ENCODE measurements at regions of chr1 and their contacts with region 1.

Region 1: GRCh38 chr1:185720633-185721272 is 13.4 kb upstream of the HMCN1 start:
- DNase-seq: peak; percentile 36
- H3K4me3 ChIP-seq: no peak overlapping the region
- CTCF ChIP-seq: peak; percentile 32

Region 2: DNA sequence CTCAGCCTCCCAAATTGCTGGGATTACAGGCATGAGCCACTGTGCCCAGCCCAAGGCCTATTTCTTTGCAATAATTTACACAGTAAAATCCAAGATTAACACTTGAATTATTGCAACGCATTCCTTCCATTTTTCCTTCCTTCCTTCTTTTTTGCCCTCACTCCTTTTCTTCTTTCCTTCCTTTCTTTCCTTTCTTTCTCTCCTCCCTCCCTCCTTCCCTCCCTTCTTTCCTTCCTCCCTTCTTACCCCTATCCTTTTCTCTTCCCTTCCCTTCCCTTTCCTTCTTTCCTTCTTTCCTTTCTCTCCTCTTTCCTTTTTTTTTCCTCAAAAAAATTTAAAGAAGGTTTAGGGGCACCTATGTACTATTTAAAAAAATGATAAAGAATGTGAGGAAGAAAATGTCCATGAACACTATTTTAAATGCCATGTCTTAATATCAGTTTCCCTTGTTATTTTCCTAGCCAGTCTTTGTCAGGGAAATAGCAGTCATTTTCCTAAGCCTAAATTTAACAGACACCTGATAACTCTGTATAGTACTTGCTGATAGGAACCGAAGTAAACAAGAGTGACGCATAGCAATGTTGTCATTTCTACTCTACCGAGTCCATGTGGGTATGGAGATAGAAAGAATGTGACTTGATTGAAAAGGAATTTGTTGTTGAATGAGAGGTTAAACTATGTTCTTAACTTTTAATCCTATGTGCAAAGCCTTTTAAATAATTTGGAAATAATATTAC is 66.4 kb before region 1 on chr1:
- CTCF ChIA-PET with region 1: no interaction called
- POLR2A ChIA-PET with region 1: no interaction called
- DNase-seq: no peak
- H3K4me3 ChIP-seq: no peak overlapping the region
- CTCF ChIP-seq: no peak

Region 3: DNA sequence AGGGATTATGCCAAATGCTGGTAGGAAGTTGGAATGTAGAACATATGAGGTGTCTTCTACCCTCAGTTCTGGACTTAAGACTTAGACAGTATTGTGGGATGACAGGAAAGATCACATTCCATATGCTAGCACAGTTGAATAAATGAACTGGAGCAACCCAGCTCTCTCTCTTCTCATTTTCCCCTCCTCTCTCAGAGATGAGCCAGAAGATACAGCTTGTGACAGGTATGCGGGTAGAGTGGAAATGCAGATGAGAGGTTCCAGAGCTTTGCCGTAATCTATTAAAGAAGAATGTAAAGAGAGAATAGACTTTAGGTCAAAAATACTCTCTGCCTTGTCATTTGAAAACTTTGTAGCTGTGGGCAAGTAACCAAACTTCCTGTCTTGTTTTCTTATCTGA is 19.1 kb before region 1 on chr1:
- CTCF ChIA-PET with region 1: interaction called, 13 read pairs
- POLR2A ChIA-PET with region 1: no interaction called
- DNase-seq: no peak
- H3K4me3 ChIP-seq: no peak overlapping the region
- CTCF ChIP-seq: no peak

Region 4: DNA sequence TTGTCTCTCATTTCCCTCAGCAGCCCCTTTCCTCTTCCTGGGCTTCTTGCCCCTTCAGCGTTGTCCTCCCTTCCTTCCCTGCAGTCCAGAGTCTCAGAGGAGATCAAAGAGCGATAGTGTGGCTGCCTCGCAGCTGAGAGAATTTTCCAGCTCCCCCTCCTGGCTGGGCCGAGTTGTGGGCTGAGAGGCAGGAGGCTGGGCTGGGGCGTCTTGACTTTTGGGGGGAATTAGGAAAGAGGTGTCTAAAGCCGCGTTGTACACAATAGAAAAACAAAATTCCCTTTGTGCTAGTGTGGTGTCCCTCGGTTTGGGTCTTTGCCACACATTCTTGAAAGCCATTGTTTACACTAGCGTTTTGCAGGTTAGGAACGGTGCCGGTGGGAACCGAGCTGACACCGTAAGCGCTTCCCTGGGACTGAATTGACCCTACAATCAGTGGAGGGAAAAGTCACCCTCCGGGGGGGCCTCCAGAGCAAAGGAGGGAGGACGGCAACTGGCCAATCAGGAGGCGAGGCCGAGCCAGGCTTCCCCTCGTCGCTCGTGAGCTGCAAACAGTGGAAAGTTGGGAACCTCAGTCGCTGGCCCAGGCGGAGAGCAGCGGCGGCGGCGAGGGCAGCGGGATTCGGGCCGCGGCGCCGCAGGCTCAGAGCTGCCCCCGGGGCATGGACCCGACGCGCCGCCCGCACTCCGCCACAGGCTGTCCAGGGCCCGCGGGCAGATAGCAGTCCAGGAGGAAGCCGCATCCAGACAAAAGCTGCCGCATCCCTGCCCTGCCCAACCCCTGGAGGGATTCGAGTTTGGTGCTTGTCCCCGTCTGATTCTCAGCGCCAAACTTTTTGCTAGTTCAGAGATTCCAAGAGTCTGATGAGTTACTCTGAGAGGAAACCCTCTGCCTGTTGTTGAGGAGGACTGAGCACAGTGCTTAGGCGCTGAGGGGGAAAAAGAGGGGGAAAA is 13.3 kb after region 1 on chr1 and contains the start of gene HMCN1:
- CTCF ChIA-PET with region 1: interaction called, 33 read pairs
- POLR2A ChIA-PET with region 1: interaction called, 4 read pairs
- DNase-seq: no peak
- H3K4me3 ChIP-seq: peak within 1 kb of the TSS; percentile 61
- CTCF ChIP-seq: peak; percentile 41

Region 5: DNA sequence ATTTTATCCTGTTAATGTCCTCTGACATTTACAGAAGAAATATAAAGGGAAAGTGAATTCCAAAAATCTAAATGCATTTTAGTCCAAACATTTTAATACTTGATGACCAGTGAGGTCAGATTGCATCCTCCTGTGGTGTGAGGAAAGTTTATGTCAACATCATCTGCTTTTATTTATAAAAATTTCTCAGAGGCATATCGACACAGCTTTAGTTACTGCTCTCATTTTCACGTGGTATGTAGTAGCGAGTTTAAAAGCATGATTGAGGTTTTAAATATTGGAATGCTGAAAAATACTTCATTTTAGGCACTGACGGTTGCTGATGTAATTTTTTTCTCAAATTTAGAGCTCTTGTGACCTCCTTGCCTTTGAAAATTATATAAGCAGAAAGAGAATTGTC is 248.3 kb after region 1 on chr1:
- CTCF ChIA-PET with region 1: interaction called, 11 read pairs
- POLR2A ChIA-PET with region 1: interaction called, 4 read pairs
- DNase-seq: no peak
- H3K4me3 ChIP-seq: no peak overlapping the region
- CTCF ChIP-seq: no peak

Region 6: DNA sequence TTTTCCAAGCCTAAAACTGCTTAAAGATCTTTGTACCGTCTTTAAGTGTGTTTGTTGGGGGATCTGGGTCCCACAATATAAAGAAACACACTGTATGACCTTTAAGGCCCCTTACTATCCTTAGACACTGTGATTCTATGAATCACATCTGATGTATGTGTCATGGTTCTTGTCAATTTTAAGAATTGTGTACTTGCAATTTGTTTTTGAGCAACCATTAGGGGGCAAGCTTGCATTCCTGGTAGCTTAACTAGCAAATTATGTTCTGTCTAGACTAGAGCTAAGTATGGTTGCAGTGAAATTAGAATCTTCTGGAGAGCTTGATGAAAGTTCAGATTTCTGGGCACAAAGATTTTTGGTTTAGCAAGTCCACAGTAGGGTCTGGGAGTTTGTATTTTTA is 434.8 kb after region 1 on chr1:
- CTCF ChIA-PET with region 1: interaction called, 20 read pairs
- POLR2A ChIA-PET with region 1: no interaction called
- DNase-seq: peak; percentile 49
- H3K4me3 ChIP-seq: no peak overlapping the region
- CTCF ChIP-seq: peak; percentile 66

Region 7: GRCh38 chr1:186212544-186213226 is 491.9 kb after region 1 on chr1:
- CTCF ChIA-PET with region 1: interaction called, 46 read pairs
- POLR2A ChIA-PET with region 1: no interaction called
- DNase-seq: peak; percentile 92
- H3K4me3 ChIP-seq: no peak overlapping the region
- CTCF ChIP-seq: peak; percentile 77

Measured in AG04449 (cell line).